Right ventricle myocardium inferior (tissue), 1 donor: ENCODE measurements at regions of chr10 and their contacts with region 1.

Region 1: DNA sequence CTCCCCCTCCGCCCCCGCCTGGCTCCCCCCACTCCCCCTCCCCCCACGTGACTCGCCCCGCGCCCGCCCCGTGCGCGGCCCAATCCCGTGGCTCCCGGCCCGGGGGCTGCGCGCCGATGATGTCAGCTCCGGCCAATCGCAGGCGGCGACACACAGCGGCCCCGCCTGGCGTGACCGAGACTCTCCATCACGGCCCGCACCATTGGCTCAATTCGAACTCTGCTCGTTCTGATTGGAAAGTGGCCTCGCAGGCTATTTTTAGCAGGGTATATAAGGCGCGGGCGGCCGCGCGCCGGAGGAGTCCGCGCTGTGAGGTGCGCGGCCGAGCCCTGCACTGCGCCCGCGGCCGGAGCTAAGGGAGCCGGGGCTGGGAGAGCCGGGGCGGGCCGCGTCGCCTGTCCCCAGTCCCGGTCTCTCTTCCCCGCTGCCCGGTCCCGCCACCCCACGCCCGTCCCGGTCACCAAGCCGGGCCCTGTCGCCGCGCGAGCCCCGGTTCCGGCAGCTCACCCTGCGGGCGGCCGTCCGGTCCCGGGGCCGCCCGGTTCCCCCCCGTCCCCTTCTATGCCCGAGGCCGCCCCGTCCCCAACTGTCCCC is 345 bp upstream of the KLF6 start:
- DNase-seq: peak; percentile 99
- ATAC-seq: peak; percentile 85

Region 2: GRCh38 chr10:3452173-3452626 is 333.2 kb before region 1 on chr10:
- intact Hi-C with region 1: loop called (anchors 2 kb)
- DNase-seq: no peak
- ATAC-seq: peak; percentile 64

Region 3: GRCh38 chr10:3805791-3806461 is 20.6 kb after region 1 on chr10:
- intact Hi-C with region 1: loop called (anchors 2 kb)
- DNase-seq: no peak
- ATAC-seq: peak; percentile 31

Region 4: GRCh38 chr10:3835770-3836169 is 50.4 kb after region 1 on chr10:
- intact Hi-C with region 1: no loop called
- DNase-seq: no peak
- ATAC-seq: peak; percentile 80

Region 5: GRCh38 chr10:4081685-4082111 is 296.3 kb after region 1 on chr10:
- intact Hi-C with region 1: loop called (anchors 2 kb)
- DNase-seq: no peak
- ATAC-seq: peak; percentile 71

Region 6: DNA sequence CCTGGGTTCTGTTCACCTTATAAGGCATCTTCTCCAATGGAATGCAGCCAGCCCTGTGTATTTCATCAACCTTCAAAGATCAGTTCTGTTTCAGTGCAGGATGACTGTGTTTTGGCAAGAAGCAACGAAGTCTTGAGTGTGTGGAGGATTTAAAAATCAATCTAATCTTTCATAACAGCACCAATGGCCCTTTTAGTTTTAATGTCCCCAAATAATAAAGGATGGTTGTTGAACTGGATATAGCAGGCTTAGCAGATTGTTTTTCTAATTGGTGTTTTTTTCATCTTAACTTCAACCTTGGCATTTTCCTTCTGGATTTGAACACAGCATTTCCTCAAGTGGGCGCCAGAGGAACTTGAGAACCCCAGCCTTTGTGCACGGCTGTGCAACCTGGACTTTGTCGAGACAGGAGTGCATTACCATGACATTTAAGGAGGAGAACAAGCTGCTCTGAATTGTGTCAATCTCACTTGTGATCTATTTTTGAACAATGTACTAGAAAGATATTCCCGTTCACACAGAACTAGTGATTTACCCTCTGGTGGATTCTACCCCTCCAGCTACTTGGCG is 727.4 kb after region 1 on chr10:
- intact Hi-C with region 1: loop called (anchors 5 kb)
- DNase-seq: peak; percentile 61
- ATAC-seq: peak; percentile 64